PC-9 (cell line): ENCODE measurements at regions of chr7 and their contacts with region 1.

Region 1: DNA sequence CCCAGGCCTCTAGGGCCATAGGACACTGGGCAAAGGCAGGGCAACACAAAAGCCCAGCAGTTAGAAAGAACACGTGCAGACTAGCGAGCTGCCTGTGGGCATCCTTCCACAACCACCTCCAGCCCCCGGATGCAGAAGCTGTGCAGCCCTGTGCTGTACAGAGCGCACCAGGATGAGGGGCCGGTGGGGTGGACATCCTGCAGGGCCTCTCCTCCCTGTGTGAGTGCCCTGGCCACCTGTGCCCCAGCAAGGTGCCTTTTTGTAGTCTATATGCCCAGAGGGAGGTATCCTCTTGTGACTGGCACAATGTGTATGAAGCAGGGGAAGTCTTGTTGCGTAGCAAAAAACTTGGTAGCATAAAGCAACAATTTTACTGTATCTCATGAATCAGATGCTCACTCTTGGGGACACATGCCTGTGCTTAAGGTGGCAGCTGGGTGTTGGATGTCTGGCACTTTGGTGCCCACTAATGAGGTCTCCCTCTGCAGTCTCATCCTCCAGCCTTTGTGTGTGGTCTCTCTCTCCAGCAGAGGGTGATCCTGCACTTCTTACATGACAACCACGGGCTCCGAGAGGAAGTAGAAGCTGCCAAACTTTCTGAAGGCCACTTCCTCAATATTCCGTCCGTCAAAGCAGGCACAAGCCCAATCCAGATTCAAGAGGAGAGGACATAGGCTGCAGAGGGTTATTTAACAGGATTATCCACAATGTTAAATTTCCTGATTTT is 8.7 kb downstream of the NCAPG2 start:
- DNase-seq: peak in 1 of 2 experiments; percentile 48
- H3K4me3 ChIP-seq: no peak overlapping the region
- H3K27ac ChIP-seq: no peak overlapping the region
- H3K4me1 ChIP-seq: no peaks in the 10 kb centered on the region
- H3K27me3 ChIP-seq: no peaks in the 10 kb centered on the region
- CTCF ChIP-seq: peak; percentile 64

Region 2: GRCh38 chr7:158680754-158681153 is 15.1 kb before region 1 on chr7:
- CTCF ChIA-PET with region 1: no interaction called
- POLR2A ChIA-PET with region 1: no interaction called
- intact Hi-C with region 1: loop called (anchors 2 kb)
- DNase-seq: no peak
- H3K4me3 ChIP-seq: no peak overlapping the region
- H3K27ac ChIP-seq: no peak overlapping the region
- H3K4me1 ChIP-seq: no peaks in the 10 kb centered on the region
- H3K27me3 ChIP-seq: no peaks in the 10 kb centered on the region
- CTCF ChIP-seq: no peak

Region 3: GRCh38 chr7:158740013-158740656 is 44.2 kb after region 1 on chr7:
- CTCF ChIA-PET with region 1: no interaction called
- POLR2A ChIA-PET with region 1: no interaction called
- intact Hi-C with region 1: loop called (anchors 2 kb)
- DNase-seq: peak; percentile 81 to 96
- H3K4me3 ChIP-seq: peak overlapping the region; percentile 8; the same call in 1 of the 2 replicates
- H3K27ac ChIP-seq: peak overlapping the region; percentile 84
- H3K4me1 ChIP-seq: peaks cover 41% of the 10 kb centered on the region
- H3K27me3 ChIP-seq: no peaks in the 10 kb centered on the region
- CTCF ChIP-seq: 0 out of 2 replicates have a peak, but pooled peaks have one; percentile 12